ENCODE measurements at regions of chr19 and their contacts with region 1.

Region 1: DNA sequence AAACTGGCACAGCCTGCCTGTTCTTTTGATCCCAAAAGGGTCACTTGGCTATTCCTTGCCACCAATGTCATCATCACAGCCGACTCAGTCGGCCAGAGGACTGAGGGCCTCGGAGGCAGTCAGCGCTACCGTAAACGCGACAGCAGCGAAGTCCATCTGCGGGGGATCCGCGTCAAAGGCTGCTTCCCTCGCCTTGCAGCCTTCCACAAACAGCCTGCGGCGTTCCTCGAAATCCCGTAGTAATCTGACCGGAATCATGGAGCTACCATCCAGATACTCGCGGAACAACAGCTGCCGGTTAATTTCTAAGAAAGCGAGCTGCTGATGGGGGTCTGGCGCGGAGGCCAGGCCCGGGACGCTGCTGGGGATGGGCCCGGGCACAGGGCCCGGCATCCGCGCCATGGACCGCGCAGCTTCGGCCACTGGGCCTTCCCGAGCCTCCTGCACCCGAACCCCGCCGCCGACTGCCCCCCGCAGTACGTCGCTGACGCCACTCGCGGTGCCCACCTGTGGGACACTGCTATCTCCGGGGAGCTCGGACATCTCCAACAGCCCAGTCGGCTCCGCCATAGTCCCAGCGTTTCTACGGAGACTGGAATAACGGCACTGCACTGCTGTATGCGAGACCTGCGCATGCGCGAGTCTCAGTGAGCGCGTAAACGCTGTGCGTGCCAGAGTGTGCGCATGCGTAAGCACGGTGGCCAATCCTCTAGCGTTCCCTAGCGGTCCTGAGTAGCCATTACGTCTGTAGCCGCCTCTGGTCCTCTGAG is at the start of gene EID2B:
- DNase-seq: peak; percentile 98
- H3K4me3 ChIP-seq: peak within 1 kb of the TSS; percentile 89
- H3K27ac ChIP-seq: no peak within 1 kb of the TSS
- H3K4me1 ChIP-seq: peaks cover 27% of the 10 kb centered on the region
- CTCF ChIP-seq: peak; percentile 91
- total RNA-seq, gene EID2B: 11.7 and 13.9 TPM in 2 replicates

Region 2: DNA sequence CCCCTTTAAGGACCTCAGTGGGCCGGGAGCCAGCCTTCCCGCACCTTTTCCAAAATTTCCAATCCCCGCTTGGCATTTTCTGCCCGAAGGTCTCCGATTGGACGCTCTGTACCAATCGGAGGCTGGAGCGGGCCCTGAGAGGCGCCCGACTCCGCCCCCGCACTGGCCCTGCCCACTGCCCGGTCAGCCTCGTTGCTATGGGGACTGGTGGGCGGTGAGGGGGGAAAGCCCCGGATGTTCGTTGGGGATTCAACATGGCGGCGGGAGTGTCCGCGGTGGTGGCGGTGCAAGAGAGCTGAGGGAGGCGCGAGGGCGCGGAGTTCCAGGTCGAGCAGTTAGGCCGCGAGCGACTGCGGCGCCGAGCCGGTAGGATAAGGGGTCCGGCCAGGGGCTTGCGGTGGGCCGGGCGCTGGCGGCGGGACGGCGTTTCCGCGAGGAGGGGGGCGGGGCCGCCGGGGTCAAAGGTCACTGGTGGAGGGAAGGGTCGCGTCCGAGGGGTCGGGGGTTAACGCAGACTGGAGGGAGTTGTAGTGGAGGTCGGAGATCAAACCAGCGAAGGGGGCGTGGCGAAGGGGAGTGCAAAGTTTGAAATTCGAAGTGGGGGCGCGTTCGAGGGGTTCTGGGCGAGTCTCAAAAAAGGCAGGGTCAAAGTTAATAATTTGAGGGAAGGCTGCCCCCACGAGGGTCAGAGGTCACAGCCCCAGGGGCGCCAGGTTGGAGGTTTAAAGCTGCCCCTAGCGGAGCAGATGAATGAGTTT is 406.7 kb before region 1 on chr19 and contains the start of gene PAK4:
- CTCF ChIA-PET with region 1: no interaction called
- POLR2A ChIA-PET with region 1: no interaction called
- intact Hi-C with region 1: loop called (anchors 10 kb)
- DNase-seq: peak; percentile 98
- H3K4me3 ChIP-seq: peak within 1 kb of the TSS; percentile 77
- H3K27ac ChIP-seq: peak within 1 kb of the TSS; percentile 55
- H3K4me1 ChIP-seq: peaks cover 20% of the 10 kb centered on the region
- CTCF ChIP-seq: no peak
- total RNA-seq, gene PAK4: 7.8 and 8.1 TPM in 2 replicates

Region 3: DNA sequence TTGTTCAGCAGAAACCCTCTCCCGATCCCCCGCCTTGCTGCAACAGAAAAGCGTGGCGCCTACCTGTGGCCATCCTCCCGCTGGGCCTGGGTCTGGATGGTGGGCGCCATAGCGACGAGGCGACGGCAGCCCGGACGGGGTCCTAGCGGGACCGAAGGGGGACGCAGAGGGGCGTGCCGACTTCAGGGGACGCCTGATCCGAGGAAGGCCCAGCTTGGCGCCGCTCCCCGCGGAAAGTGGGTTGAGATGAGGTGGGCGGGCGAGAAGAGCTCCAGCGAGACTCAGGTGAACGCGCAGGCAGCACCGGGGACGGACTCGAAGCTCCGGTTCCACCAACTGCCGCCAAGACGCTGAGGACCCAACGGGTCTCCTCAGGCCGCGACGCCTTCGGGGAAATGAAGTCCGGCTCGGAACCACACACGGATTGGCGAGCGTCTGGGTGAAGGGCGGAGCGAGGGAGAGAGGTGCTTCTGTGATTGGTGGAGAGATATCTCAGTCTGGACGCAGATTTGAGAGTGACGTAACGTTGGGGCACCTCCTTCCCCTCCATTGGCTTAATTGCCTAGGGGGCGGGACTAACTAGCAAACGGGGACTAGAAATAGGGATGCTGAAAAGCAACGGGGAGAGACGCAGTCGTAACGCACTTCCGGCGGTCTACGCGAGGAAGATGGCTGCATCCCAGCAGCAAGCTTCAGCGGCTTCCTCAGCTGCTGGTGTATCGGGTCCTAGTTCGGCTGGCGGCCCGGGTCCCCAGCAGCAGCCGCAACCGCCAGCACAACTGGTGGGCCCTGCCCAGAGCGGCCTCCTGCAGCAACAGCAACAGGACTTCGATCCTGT is 141.4 kb before region 1 on chr19 and contains the starts of genes MED29 and PAF1:
- CTCF ChIA-PET with region 1: no interaction called
- POLR2A ChIA-PET with region 1: no interaction called
- intact Hi-C with region 1: loop called (anchors 2 kb)
- DNase-seq: peak; percentile 99
- H3K4me3 ChIP-seq: peak within 1 kb of the TSS; percentile 86
- H3K27ac ChIP-seq: peak within 1 kb of the TSS; percentile 84
- H3K4me1 ChIP-seq: peaks cover 24% of the 10 kb centered on the region
- CTCF ChIP-seq: peak; percentile 57; the same call in 1 of the 2 replicates
- total RNA-seq, gene MED29: 15.7 and 28.3 TPM in 2 replicates
- total RNA-seq, gene PAF1: 33.1 and 35.4 TPM in 2 replicates

Region 4: DNA sequence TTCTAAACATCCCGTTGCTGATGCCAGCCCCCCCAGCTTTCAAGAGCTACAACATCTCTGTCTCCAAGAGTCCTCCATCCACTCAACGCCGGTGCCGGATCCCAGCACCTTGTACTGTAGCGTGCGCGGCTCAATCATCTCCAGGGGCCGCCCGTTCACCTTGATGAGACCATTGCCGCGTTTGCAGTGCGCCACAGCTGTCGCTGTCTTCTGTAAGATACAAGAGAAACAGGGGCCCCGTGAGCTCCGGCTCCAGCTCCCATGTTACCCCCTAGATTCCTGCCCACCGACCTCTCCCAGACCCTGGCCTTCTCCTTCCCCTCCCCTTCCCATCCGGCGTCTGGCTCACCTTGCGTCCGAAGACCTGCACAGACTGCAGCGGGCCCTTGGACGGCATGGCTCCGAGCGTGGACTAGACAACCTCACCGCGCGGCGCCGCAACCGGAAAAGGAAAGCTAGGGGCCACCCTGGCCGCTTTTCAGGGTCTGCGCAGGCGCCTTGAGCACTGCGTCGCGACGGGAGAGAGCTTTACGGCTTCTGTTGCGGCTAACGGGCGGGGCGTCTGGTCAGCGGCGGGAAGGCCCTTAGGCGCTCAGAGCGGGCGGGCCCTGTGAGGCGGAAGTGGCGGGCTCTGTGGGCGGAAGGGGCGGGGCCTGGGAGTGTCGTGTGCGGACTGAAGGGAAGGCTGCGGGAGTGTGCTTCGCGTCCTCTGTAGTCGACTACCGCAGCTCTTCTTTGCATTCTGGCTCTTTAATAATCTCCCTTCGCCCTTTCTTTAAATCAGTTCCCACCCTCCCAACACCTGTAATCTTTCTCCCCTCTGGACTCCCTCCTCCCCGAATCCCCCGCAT is 96.7 kb before region 1 on chr19 and contains the start of gene RPS16:
- CTCF ChIA-PET with region 1: interaction called, 4 read pairs
- POLR2A ChIA-PET with region 1: interaction called, 10 read pairs
- intact Hi-C with region 1: loop called (anchors 1 kb)
- DNase-seq: peak; percentile 100
- H3K4me3 ChIP-seq: peak within 1 kb of the TSS; percentile 97
- H3K27ac ChIP-seq: peak within 1 kb of the TSS; percentile 78
- H3K4me1 ChIP-seq: peaks cover 56% of the 10 kb centered on the region
- CTCF ChIP-seq: no peak
- total RNA-seq, gene RPS16: 538 and 634 TPM in 2 replicates

Region 5: GRCh38 chr19:39445265-39446111 is 86.9 kb before region 1 on chr19 and contains the start of gene SUPT5H:
- CTCF ChIA-PET with region 1: interaction called, 4 read pairs
- POLR2A ChIA-PET with region 1: interaction called, 5 read pairs
- intact Hi-C with region 1: loop called (anchors 1 kb)
- DNase-seq: peak; percentile 100
- H3K4me3 ChIP-seq: peak within 1 kb of the TSS; percentile 92
- H3K27ac ChIP-seq: peak within 1 kb of the TSS; percentile 86
- H3K4me1 ChIP-seq: peaks cover 56% of the 10 kb centered on the region
- CTCF ChIP-seq: no peak
- total RNA-seq, gene SUPT5H: 70.1 and 74.6 TPM in 2 replicates

Region 6: DNA sequence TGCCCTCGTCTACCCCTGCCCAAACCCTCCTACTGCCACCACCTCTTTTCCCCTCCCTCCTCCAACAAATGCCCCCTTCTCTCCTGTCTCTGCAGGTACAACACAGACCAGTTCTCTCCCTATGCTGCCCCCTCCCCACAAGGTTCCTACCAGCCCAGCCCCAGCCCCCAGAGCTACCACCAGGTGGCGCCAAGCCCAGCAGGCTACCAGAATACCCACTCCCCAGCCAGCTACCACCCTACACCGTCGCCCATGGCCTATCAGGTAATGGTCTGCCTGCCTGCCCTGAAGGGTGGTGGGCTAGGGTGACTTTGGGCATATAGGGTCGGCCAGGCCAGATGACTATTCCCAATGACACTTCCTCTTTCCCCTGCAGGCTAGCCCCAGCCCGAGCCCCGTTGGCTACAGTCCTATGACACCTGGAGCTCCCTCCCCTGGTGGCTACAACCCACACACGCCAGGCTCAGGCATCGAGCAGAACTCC is 58.2 kb before region 1 on chr19:
- CTCF ChIA-PET with region 1: interaction called, 7 read pairs
- POLR2A ChIA-PET with region 1: no interaction called
- intact Hi-C with region 1: loop called (anchors 1 kb)
- DNase-seq: peak; percentile 65
- H3K4me3 ChIP-seq: no peak overlapping the region
- H3K27ac ChIP-seq: no peak overlapping the region
- H3K4me1 ChIP-seq: no peaks in the 10 kb centered on the region
- CTCF ChIP-seq: peak; percentile 86

Region 7: GRCh38 chr19:39502640-39503417 is 29.6 kb before region 1 on chr19:
- CTCF ChIA-PET with region 1: interaction called, 3 read pairs
- POLR2A ChIA-PET with region 1: interaction called, 3 read pairs
- intact Hi-C with region 1: loop called (anchors 2 kb)
- DNase-seq: peak; percentile 92
- H3K4me3 ChIP-seq: no peak overlapping the region
- H3K27ac ChIP-seq: no peak overlapping the region
- H3K4me1 ChIP-seq: peaks cover 22% of the 10 kb centered on the region
- CTCF ChIP-seq: peak; percentile 85